Prostate gland (tissue), 2 donors: ENCODE measurements at regions of chr3 and their contacts with region 1.

Region 1: DNA sequence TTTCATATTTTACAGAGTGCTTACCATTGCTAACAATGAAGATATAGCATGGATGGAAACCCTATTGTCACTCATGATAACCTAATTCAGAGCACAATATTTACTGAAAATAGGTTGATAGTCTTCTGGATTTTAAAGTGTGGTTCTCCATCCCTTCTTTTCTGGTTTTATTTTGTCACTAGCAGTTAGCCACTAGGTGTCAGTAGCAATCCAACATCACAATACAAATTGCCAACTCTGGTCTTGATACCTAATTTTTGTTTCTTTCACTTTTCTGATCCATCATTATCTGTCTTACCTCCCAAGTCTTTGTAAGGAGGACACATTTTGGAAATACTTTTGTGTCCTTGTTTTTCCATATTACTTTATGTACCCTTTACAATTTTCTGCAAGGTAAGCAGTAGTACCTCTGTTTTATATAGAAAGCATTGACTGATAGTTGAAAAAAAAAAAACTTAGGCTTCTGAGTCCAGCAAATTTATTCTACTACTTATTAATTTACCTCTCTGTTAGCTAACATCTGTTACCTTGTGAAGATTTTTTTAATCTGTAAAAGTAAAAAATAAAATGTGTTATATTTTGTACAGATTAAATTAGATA is 28.3 kb upstream of the CRYBG3 start:
- DNase-seq: peak; percentile 21
- H3K4me3 ChIP-seq: no peak overlapping the region
- H3K27ac ChIP-seq: no peak overlapping the region
- H3K4me1 ChIP-seq: no peaks in the 10 kb centered on the region
- H3K27me3 ChIP-seq: no peaks in the 10 kb centered on the region
- CTCF ChIP-seq: peak; percentile 67 to 88 (median 80)
- POLR2A ChIP-seq: no peak

Region 2: DNA sequence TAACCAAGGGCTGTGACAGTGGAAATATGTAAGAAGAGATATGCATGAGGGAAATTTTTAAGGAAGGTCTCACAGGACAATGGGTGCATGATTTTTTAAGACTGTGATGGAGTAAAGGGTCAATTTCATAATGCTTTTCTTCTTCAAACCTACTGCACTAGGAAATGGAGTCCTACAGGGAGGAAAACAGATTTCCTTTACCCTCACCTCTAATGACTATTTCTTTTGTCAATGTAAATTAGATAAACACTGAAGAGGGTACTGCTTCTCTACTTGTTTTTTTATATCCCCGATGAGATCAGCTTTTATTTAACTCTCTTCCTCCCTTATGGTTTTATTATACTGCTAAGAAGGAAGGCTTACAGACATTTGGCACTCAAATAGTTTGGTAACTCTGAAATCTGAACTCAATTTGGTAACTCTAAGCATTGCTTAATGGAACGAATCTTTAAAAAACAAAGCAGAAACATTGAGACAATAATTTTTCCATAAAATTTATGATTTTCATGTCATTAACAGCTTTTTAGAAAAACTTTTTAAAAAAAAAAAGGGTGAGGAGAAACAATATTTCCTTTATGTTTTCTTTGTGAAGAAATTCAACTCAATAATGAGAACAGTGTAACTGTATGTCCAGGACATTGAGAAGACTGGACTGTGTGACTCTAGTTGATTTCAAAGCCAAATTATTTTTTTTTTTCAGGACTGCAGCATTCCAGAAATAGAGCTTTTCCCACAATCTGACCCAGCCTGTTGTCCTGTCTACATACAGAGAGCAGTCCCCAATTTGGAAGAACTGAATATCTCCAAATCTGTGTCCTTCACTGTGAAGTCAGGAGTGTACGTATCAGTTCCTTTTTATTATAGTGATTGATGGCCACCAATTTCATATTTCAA is 92.7 kb after region 1 on chr3:
- intact Hi-C with region 1: no loop called
- DNase-seq: no peak
- H3K4me3 ChIP-seq: no peak overlapping the region
- H3K27ac ChIP-seq: no peak overlapping the region
- H3K4me1 ChIP-seq: no peaks in the 10 kb centered on the region
- H3K27me3 ChIP-seq: no peaks in the 10 kb centered on the region
- CTCF ChIP-seq: no peak
- POLR2A ChIP-seq: no peak

Region 3: DNA sequence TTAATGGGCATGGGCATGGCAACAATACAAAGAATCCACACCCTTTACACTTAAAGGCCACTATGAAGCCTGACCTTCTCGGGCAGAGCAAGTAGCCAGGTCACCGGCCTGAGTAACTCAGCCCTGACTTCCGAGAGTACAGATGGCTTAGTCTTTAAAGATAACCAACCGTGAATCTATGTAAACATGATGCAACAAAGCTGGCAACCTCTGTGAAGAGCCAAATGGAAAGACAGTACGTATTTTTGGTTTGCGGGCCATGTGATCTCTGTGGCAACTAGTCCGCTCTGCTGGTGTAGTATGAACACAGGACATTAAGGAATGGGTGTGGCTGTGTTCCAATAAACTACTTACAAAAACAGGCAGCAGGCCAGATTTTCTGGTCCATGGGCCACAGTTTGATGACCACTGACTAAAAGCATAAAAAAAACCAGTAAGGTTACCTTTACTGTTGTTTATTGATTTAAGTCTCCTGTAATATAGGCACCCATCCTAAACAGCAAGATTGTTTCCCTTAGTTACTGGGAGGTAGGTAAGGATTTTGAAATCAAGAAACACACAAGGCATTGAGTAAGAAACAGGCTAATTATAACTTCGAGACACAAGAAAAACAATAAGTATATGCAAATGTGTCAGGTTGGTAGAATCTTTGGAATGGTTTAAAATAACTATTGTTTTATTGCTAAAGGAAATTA is 164.2 kb after region 1 on chr3:
- intact Hi-C with region 1: no loop called
- DNase-seq: peak; percentile 36
- H3K4me3 ChIP-seq: no peak overlapping the region
- H3K27ac ChIP-seq: no peak overlapping the region
- H3K4me1 ChIP-seq: no peaks in the 10 kb centered on the region
- H3K27me3 ChIP-seq: no peaks in the 10 kb centered on the region
- CTCF ChIP-seq: no peak
- POLR2A ChIP-seq: no peak

Region 4: DNA sequence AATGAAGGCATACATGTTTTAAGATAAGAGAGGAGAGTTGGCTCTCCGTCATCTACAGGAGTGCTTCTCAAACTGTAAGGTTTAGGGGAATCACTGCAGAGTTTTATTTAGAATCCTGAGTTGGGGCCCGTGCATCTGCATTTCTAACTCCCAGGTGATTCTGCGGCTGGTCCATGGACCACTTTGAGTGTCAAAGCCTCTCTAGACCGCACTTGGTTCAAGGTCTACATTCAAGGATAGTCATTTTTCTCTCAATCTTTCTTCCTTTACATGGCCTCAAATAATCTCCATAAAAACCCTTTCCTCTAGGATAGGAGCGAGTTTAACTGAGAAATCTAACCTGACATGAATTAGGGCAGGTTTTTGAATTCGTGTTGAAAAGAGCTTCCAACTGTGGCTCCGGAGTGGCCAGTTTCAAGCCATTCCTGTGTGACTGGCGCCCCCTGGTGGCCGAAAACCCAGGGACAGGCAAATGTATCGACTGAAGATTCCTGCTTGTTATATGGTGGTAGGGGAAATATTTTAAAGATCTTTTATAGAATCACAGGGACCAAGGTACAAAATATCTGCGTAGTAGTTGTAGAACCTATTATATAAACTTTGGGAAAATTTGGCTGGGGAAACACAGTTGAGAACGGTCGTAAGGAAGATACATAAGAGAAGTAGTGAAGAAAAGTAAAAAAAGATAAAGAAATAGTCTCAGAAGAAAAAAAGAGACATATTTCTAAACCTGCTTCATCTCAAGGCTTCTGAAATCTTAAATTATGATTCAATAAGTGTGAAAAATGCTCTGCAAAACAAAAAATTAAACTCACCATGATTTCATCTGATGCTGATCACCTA is 229.7 kb after region 1 on chr3:
- intact Hi-C with region 1: loop called (anchors 2 kb)
- DNase-seq: peak; percentile 85
- H3K4me3 ChIP-seq: no peak overlapping the region
- H3K27ac ChIP-seq: no peak overlapping the region
- H3K4me1 ChIP-seq: no peaks in the 10 kb centered on the region
- H3K27me3 ChIP-seq: no peaks in the 10 kb centered on the region
- CTCF ChIP-seq: peak; percentile 90 to 100 (median 96)
- POLR2A ChIP-seq: no peak

Region 5: GRCh38 chr3:98185180-98185579 is 391.7 kb after region 1 on chr3:
- intact Hi-C with region 1: no loop called
- DNase-seq: no peak
- H3K4me3 ChIP-seq: no peak overlapping the region
- H3K27ac ChIP-seq: no peak overlapping the region
- H3K4me1 ChIP-seq: no peaks in the 10 kb centered on the region
- H3K27me3 ChIP-seq: no peaks in the 10 kb centered on the region
- CTCF ChIP-seq: peak in 1 of 4 experiments; percentile 44
- POLR2A ChIP-seq: no peak